ENCODE measurements at regions of chr2 and their contacts with region 1.

Region 1: GRCh38 chr2:177724398-177725287 is 332.1 kb downstream of the AGPS start:
- DNase-seq: peak in 3 of 5 donors; percentile 36 to 53 (median 40)
- ATAC-seq: peak; percentile 64 to 83 (median 74)
- H3K4me3 ChIP-seq: no peak overlapping the region
- H3K27ac ChIP-seq: peak overlapping the region in 2 of 12 donors; percentile 3 to 24
- H3K4me1 ChIP-seq: peaks cover 0 to 9% (median 0%) of the 10 kb centered on the region in 12 donors
- H3K27me3 ChIP-seq: peaks cover 0 to 5% (median 0%) of the 10 kb centered on the region in 9 donors
- CTCF ChIP-seq: peak; percentile 80 to 95 (median 86)
- POLR2A ChIP-seq: no peak

Region 2: GRCh38 chr2:177489719-177490301 is 234.8 kb before region 1 on chr2:
- intact Hi-C with region 1: loop called (anchors 2 to 5 kb)
- DNase-seq: no peak
- ATAC-seq: no peak
- H3K4me3 ChIP-seq: no peak overlapping the region
- H3K27ac ChIP-seq: no peak overlapping the region
- H3K4me1 ChIP-seq: peaks cover 0 to 3% (median 0%) of the 10 kb centered on the region in 12 donors
- H3K27me3 ChIP-seq: no peaks in the 10 kb centered on the region
- CTCF ChIP-seq: peak; percentile 33 to 71 (median 60)
- POLR2A ChIP-seq: no peak

Region 3: DNA sequence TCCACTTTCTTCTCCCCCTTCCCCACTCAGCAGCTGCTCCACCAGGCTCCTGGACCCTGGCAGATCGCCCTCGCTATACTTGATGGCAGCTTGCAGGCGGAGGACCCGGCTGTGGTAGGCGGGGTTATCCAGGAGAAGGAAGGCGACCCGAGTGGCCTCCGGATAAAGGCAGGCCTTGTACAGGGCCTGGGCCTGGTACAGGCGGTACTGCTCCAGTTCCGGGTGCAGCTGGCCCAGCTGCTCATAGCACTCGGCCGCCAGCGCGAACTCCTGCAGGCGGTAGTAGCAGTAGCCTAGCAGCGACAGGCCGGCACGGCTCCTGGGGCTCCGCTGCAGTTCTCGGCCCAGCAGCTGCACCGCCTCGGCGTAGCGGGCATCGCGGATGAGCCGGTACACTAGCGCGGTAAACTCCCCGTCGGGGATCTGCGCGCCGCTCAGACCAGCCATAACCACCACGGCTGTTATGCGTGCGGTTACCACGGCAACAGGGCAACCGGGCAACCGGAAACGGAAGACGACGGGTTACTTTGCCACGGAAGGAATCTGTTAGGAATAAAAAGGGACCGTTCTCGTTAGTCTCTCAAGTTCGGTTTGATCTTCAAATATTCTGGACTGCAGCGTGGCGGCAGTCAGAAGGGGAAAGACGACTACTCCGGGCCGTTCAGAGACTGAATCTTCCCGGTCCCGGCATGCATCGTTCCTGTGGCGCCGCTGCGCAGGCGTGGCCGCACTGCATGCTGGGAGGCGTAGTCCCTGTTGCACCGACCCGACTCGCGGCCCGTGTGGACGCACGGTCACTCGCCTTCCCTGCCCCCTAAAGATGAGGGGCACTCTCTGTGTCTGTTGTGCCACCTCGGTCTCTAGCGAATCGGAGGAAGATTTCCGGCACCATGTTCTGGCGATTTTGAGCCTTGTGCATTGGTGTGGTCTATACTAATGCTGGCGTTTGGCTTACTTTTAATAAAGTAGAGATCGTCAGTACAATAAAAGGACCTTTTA is 106.1 kb before region 1 on chr2:
- intact Hi-C with region 1: loop called in 2 of 10 experiments (anchors 2 kb)
- DNase-seq: peak; percentile 91 to 96 (median 93)
- ATAC-seq: peak; percentile 96 to 99 (median 98)
- H3K4me3 ChIP-seq: peak overlapping the region; percentile 62 to 94 (median 72)
- H3K27ac ChIP-seq: peak overlapping the region; percentile 92 to 100 (median 97)
- H3K4me1 ChIP-seq: peaks cover 0 to 19% (median 7%) of the 10 kb centered on the region in 12 donors
- H3K27me3 ChIP-seq: no peaks in the 10 kb centered on the region
- CTCF ChIP-seq: no peak
- POLR2A ChIP-seq: peak in 1 of 2 donors; percentile 50

Region 4: GRCh38 chr2:177929662-177930522 is 205.2 kb after region 1 on chr2:
- intact Hi-C with region 1: no loop called
- DNase-seq: no peak
- ATAC-seq: no peak
- H3K4me3 ChIP-seq: no peak overlapping the region
- H3K27ac ChIP-seq: no peak overlapping the region
- H3K4me1 ChIP-seq: no peaks in the 10 kb centered on the region
- H3K27me3 ChIP-seq: no peaks in the 10 kb centered on the region
- CTCF ChIP-seq: no peak
- POLR2A ChIP-seq: no peak

Measured in heart left ventricle (tissue), 16 donors.